ENCODE measurements at regions of chr2 and their contacts with region 1.

Region 1: GRCh38 chr2:170386554-170386953 is 208.6 kb downstream of the MYO3B start:
- DNase-seq: no peak
- ATAC-seq: no peak

Region 2: GRCh38 chr2:170365686-170366085 is 20.9 kb before region 1 on chr2:
- intact Hi-C with region 1: loop called (anchors 1 kb)
- DNase-seq: no peak
- ATAC-seq: no peak

Measured in sciatic nerve (tissue), 2 donors.